Panc1 (cell line): ENCODE measurements at regions of chr5 and their contacts with region 1.

Region 1: GRCh38 chr5:73448463-73449136 is at the start of gene FOXD1:
- DNase-seq: peak; percentile 86
- ATAC-seq: peak; percentile 91
- H3K4me3 ChIP-seq: peak within 1 kb of the TSS; percentile 61 to 83
- H3K27ac ChIP-seq: peak within 1 kb of the TSS; percentile 86
- H3K4me1 ChIP-seq: peaks cover 30% of the 10 kb centered on the region
- H3K27me3 ChIP-seq: no peaks in the 10 kb centered on the region
- CTCF ChIP-seq: 0 out of 2 replicates have a peak, but pooled peaks have one; percentile 20
- total RNA-seq, gene FOXD1: 63.3 TPM

Region 2: DNA sequence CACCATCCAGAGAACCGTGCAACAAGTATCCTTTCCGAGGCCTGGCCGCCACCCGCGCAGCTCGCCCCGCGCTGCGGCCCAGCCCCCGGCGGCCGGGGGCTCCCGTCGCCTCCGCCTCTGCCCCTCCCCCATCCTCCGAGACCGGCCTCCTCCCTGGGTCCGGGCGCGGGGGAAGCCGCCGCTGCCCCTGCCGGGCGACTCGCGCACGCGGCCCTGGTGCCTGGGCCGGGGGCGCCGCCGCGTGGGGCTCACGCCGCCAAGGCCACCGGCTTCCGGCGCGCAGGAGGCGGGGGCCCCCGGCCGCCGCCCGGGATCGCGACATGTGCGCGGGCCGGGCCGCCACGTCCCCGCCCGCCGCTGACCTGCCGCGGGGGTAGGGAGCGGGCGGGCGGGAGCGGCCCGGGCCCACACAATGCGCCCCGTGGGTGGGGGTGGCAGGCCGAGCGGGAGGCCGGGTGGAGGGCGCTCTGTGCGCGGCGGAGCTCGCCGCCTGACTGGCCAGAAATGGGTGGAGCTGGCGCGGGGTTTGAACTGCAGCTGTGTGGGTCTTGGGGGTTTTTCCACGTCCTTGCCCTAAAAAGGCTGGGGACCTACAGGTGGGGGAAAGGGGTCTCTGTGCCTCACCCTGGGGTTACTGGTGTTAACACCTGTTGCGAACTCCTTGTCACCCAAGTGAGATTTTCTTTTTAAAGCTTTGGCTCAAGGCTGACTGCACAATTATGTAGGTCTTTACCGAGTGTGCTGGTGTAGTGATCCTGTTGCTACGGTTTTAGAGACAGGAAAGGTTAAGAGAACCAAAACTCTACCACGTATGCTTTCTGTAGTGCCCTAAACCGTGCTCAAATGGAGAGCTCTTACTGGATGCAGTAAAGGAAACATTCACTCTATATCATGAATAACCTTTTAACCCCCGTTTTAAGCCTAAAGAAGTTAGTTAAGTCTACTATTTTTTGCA is 599.8 kb before region 1 on chr5:
- CTCF ChIA-PET with region 1: no interaction called
- POLR2A ChIA-PET with region 1: interaction called, 16 read pairs
- in situ Hi-C with region 1: no loop called
- intact Hi-C with region 1: no loop called
- DNase-seq: no peak
- ATAC-seq: peak; percentile 75
- H3K4me3 ChIP-seq: peak overlapping the region; percentile 80 to 84
- H3K27ac ChIP-seq: peak overlapping the region; percentile 94
- H3K4me1 ChIP-seq: peaks cover 56% of the 10 kb centered on the region
- H3K27me3 ChIP-seq: no peaks in the 10 kb centered on the region
- CTCF ChIP-seq: no peak

Region 3: DNA sequence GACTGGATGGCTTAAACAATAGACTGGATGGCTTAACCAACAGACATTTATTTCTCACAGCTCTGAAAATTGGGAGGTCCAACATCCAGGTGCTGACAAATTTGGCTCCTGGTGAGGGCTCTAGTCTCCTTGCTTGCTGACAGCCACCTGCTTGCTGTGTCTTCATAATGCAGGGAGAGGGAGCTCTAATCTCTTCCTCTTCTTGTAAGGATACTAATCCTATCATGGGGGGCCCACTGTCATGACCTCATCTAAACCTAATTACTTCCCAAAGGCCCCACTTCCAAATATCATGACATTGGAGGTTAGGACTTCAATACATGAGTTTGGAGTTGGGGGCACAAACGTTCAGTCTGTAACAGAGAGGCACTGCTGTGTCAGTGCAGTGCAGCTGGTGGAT is 26.4 kb before region 1 on chr5:
- CTCF ChIA-PET with region 1: interaction called, 3 read pairs
- POLR2A ChIA-PET with region 1: interaction called, 18 read pairs
- in situ Hi-C with region 1: no loop called
- intact Hi-C with region 1: no loop called
- DNase-seq: no peak
- ATAC-seq: peak; percentile 46; the same call in 1 of the 2 replicates
- H3K4me3 ChIP-seq: no peak overlapping the region
- H3K27ac ChIP-seq: no peak overlapping the region; the same call in 1 of the 2 replicates
- H3K4me1 ChIP-seq: peaks cover 22% of the 10 kb centered on the region
- H3K27me3 ChIP-seq: no peaks in the 10 kb centered on the region
- CTCF ChIP-seq: peak; percentile 62

Region 4: GRCh38 chr5:73564675-73565074 is 116.1 kb after region 1 on chr5:
- CTCF ChIA-PET with region 1: no interaction called
- POLR2A ChIA-PET with region 1: interaction called, 11 read pairs
- in situ Hi-C with region 1: no loop called
- intact Hi-C with region 1: no loop called
- DNase-seq: no peak
- ATAC-seq: peak; percentile 19
- H3K4me3 ChIP-seq: peak overlapping the region; percentile 98 to 100
- H3K27ac ChIP-seq: peak overlapping the region; percentile 99
- H3K4me1 ChIP-seq: peaks cover 19% of the 10 kb centered on the region; the same call in 1 of the 2 replicates
- H3K27me3 ChIP-seq: no peaks in the 10 kb centered on the region
- CTCF ChIP-seq: no peak

Region 5: DNA sequence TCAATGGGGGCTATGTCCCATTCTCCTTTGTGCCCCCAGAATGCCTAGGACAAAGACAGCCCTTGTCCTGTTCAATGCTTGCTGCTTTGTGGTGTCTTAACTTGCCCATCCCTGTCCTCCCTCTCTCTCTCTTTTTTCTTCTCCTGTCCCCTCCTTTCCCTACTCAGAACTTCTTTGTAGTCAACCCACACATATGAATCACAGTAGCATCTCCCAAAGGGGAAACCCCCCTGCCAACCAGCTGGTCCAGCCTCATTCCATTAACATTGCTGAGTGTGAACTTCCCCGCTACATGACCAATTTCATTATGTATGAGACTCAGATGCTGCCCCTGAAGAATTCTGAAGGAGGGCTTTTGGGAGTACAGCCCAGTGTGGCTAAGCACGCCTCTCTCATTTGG is 783.7 kb after region 1 on chr5:
- CTCF ChIA-PET with region 1: no interaction called
- POLR2A ChIA-PET with region 1: no interaction called
- in situ Hi-C with region 1: no loop called
- intact Hi-C with region 1: no loop called
- DNase-seq: no peak
- ATAC-seq: no peak
- H3K4me3 ChIP-seq: no peak overlapping the region
- H3K27ac ChIP-seq: no peak overlapping the region
- H3K4me1 ChIP-seq: no peaks in the 10 kb centered on the region
- H3K27me3 ChIP-seq: no peaks in the 10 kb centered on the region
- CTCF ChIP-seq: no peak